Natural killer cell (primary cell): ENCODE measurements at regions of chrX and their contacts with region 1.

Region 1: DNA sequence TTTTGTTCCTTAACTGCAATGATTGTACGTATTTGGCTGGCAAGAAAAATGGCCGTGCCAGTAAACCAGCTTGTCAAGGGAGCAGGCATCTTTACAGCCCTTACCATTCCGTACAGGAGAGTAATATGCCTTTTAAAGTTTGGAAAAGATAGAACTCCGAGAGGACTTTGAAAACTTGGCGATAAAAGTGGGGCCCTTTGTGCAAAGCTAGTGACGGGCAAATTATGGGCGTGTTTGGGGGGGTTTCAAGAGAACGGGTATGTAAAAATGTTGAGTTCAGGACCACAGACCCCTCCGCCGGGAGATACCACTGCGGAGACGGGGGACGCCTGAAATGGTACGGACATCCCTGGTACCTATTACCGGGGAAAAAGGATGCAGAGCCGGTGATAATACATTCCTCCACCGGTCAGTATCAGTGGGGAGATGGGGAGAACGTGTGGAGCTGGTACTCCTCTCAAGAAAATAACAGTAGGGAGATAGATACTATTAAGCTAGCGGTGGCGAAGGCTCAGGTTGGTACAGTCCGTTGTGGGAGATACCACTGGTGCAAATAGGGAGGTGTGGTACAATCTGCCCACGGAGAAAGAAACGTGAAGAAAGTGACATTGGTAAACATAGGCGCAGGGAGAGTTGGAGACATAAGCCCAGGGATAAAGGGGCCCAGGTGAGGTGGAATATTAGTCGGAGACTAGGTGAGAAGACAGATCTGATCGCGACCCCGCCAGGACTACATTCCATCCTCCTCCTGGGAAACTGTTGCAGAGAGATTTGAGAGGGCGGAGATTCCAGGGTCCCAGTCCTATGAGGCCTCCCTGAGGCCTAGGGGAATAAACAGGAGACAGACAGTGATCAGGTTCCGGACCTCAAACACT is 14.5 kb downstream of the SPACA5 start:
- DNase-seq: peak; percentile 76 to 88
- ATAC-seq: peak; percentile 79 to 88 (median 79)
- H3K4me3 ChIP-seq: peak overlapping the region; percentile 75
- H3K4me3 Mint-ChIP-seq: peak overlapping the region; percentile 98
- H3K27ac ChIP-seq: peak overlapping the region; percentile 94
- H3K27ac Mint-ChIP-seq: peak overlapping the region; percentile 91 to 99
- H3K4me1 ChIP-seq: peaks cover 6% of the 10 kb centered on the region
- H3K4me1 Mint-ChIP-seq: peaks cover 12 to 13% of the 10 kb centered on the region in 2 donors
- H3K27me3 ChIP-seq: no peaks in the 10 kb centered on the region
- H3K27me3 Mint-ChIP-seq: no peaks in the 10 kb centered on the region
- CTCF ChIP-seq: no peak

Region 2: GRCh38 chrX:47560831-47561652 is 460.2 kb before region 1 on chrX and contains the start of gene ARAF:
- intact Hi-C with region 1: loop called (anchors 5 kb)
- DNase-seq: peak; percentile 89 to 98
- ATAC-seq: peak; percentile 85 to 95 (median 88)
- H3K4me3 ChIP-seq: peak within 1 kb of the TSS; percentile 64
- H3K4me3 Mint-ChIP-seq: peak within 1 kb of the TSS; percentile 96
- H3K27ac ChIP-seq: peak within 1 kb of the TSS; percentile 97
- H3K27ac Mint-ChIP-seq: peak within 1 kb of the TSS; percentile 95 to 97
- H3K4me1 ChIP-seq: peaks cover 35% of the 10 kb centered on the region
- H3K4me1 Mint-ChIP-seq: peaks cover 17 to 41% of the 10 kb centered on the region in 2 donors
- H3K27me3 ChIP-seq: no peaks in the 10 kb centered on the region
- H3K27me3 Mint-ChIP-seq: no peaks in the 10 kb centered on the region
- CTCF ChIP-seq: no peak
- total RNA-seq, gene ARAF: 162 to 173 (median 169) TPM

Region 3: DNA sequence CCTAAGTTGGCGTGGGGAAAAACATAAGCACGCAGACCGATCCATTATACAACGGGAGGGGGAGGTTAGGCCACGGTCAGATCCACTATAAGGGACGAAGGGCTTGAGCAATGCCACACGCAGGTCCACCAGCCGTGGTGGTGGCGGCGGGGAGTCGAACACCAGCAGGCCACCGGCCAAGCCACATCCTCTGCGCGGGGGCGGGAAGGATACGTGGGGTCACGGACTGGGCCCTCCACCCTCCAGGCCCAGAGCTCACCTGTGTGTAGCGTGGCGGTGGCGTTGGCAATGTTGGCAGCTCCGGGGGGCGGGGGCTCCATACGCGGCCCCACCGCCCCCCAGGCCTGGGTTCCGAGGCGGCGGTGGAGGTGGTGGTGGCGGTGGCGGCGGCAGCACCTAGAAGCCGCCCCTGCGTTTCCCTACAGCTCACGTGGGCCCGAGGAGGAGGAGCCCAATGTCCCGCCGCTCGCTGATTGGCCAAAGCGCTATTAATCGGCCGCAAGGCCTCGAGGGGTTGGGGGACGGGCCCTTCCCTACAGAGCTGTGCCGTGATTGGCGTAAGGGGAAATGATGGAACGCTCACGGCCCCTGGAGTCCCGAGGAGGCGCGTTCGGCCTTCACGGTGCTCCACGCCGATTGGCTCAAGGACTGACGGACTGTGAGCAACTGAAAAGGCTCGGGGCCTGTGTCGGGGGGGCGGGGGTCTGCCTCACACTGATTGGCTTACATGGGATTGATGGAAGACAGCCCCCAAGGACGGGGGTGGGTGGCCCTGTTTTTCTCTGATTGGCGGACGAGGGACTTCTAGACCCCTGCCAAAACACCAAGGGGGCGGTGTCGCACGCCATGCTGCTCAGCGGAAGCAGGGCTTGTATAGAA is 370.9 kb before region 1 on chrX and contains the start of gene ELK1:
- intact Hi-C with region 1: loop called (anchors 10 kb)
- DNase-seq: peak; percentile 81 to 94
- ATAC-seq: peak; percentile 88 to 97 (median 91)
- H3K4me3 ChIP-seq: peak within 1 kb of the TSS; percentile 56
- H3K4me3 Mint-ChIP-seq: peak within 1 kb of the TSS; percentile 88
- H3K27ac ChIP-seq: peak within 1 kb of the TSS; percentile 64
- H3K27ac Mint-ChIP-seq: peak within 1 kb of the TSS; percentile 83 to 85
- H3K4me1 ChIP-seq: peaks cover 22% of the 10 kb centered on the region
- H3K4me1 Mint-ChIP-seq: peaks cover 15 to 23% of the 10 kb centered on the region in 2 donors
- H3K27me3 ChIP-seq: no peaks in the 10 kb centered on the region
- H3K27me3 Mint-ChIP-seq: no peaks in the 10 kb centered on the region
- CTCF ChIP-seq: no peak
- total RNA-seq, gene ELK1: 14.1 to 15.2 (median 14.8) TPM

Region 4: GRCh38 chrX:47836164-47837072 is 184.8 kb before region 1 on chrX and contains the start of gene ZNF81:
- intact Hi-C with region 1: loop called (anchors 1 kb)
- DNase-seq: peak; percentile 87 to 95
- ATAC-seq: peak; percentile 88 to 94 (median 90)
- H3K4me3 ChIP-seq: peak within 1 kb of the TSS; percentile 74
- H3K4me3 Mint-ChIP-seq: peak within 1 kb of the TSS; percentile 91
- H3K27ac ChIP-seq: peak within 1 kb of the TSS; percentile 79
- H3K27ac Mint-ChIP-seq: peak within 1 kb of the TSS; percentile 93 to 99
- H3K4me1 ChIP-seq: peaks cover 4% of the 10 kb centered on the region
- H3K4me1 Mint-ChIP-seq: peaks cover 20% of the 10 kb centered on the region in 2 donors
- H3K27me3 ChIP-seq: no peaks in the 10 kb centered on the region
- H3K27me3 Mint-ChIP-seq: peaks cover 0 to 7% of the 10 kb centered on the region in 2 donors
- CTCF ChIP-seq: no peak
- total RNA-seq, gene ZNF81: 20.9 to 23.7 (median 21.2) TPM

Region 5: DNA sequence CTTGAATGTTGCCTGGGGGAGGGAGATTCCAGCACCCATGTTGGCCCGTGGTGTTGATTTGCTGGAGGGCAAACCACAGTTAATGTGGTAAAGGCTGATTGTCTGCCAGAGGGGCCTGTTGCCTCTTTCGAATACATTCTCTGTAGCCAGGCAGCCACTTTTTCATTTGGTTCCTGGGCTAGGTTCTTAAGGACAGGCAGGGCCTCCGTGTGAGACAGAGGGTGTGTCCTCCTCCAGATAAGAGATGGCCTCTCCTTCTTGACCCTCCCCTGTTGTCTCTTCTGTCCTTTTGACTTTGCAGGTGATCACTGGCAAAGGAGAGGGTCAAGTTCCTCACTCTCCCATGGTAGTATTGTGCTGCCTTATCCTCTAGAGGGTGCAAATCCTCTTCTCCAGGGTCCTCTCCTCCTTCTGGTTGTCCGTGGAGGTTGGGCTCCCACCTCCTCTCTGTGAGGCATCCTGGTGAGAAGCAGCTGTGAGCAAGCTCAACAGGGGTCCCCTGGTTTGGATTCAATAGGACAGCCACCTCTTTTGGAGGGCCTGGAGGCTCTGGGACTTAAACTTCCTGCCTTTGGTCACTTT is 62.4 kb before region 1 on chrX:
- intact Hi-C with region 1: loop called (anchors 10 kb)
- DNase-seq: peak in 1 of 2 donors; percentile 55
- ATAC-seq: peak in 1 of 3 donors; percentile 45
- H3K4me3 ChIP-seq: no peak overlapping the region
- H3K4me3 Mint-ChIP-seq: no peak overlapping the region
- H3K27ac ChIP-seq: no peak overlapping the region
- H3K27ac Mint-ChIP-seq: no peak overlapping the region
- H3K4me1 ChIP-seq: no peaks in the 10 kb centered on the region
- H3K4me1 Mint-ChIP-seq: no peaks in the 10 kb centered on the region
- H3K27me3 ChIP-seq: no peaks in the 10 kb centered on the region
- H3K27me3 Mint-ChIP-seq: no peaks in the 10 kb centered on the region
- CTCF ChIP-seq: no peak